Endothelial cell of umbilical vein (primary cell): ENCODE measurements at regions of chr20 and their contacts with region 1.

Region 1: GRCh38 chr20:47304287-47304686 is 52.2 kb downstream of the ZMYND8 start:
- DNase-seq: peak; percentile 57
- H3K4me3 ChIP-seq: no peak overlapping the region
- H3K27ac ChIP-seq: peak overlapping the region; percentile 19
- H3K4me1 ChIP-seq: peaks cover 20% of the 10 kb centered on the region
- H3K27me3 ChIP-seq: no peaks in the 10 kb centered on the region
- CTCF ChIP-seq: peak in 1 of 2 donors; percentile 5
- POLR2A ChIP-seq: no peak

Region 2: GRCh38 chr20:47290008-47290407 is 14.3 kb before region 1 on chr20:
- CTCF ChIA-PET with region 1: interaction called, 10 read pairs
- POLR2A ChIA-PET with region 1: no interaction called
- dilution Hi-C with region 1: no loop called
- intact Hi-C with region 1: no loop called
- DNase-seq: no peak
- H3K4me3 ChIP-seq: no peak overlapping the region
- H3K27ac ChIP-seq: no peak overlapping the region
- H3K4me1 ChIP-seq: peaks cover 2% of the 10 kb centered on the region
- H3K27me3 ChIP-seq: no peaks in the 10 kb centered on the region
- CTCF ChIP-seq: no peak
- POLR2A ChIP-seq: no peak

Region 3: GRCh38 chr20:47348539-47349142 is 44.4 kb after region 1 on chr20:
- CTCF ChIA-PET with region 1: interaction called, 14 read pairs
- POLR2A ChIA-PET with region 1: interaction called, 4 read pairs
- dilution Hi-C with region 1: no loop called
- intact Hi-C with region 1: no loop called
- DNase-seq: peak; percentile 43
- H3K4me3 ChIP-seq: no peak overlapping the region
- H3K27ac ChIP-seq: peak overlapping the region; percentile 97
- H3K4me1 ChIP-seq: peaks cover 62% of the 10 kb centered on the region
- H3K27me3 ChIP-seq: no peaks in the 10 kb centered on the region
- CTCF ChIP-seq: no peak
- POLR2A ChIP-seq: no peak